ENCODE measurements at regions of chr15 and their contacts with region 1.

Region 1: GRCh38 chr15:55846116-55846707 is 103.3 kb upstream of the PRTG start:
- DNase-seq: peak; percentile 41
- H3K4me3 Mint-ChIP-seq: no peak overlapping the region
- H3K27ac Mint-ChIP-seq: no peak overlapping the region
- H3K4me1 Mint-ChIP-seq: peaks cover 2% of the 10 kb centered on the region
- H3K27me3 Mint-ChIP-seq: no peaks in the 10 kb centered on the region

Region 2: GRCh38 chr15:55649054-55649423 is 197.2 kb before region 1 on chr15:
- CTCF ChIA-PET with region 1: interaction called, 68 read pairs
- POLR2A ChIA-PET with region 1: no interaction called
- DNase-seq: no peak
- H3K4me3 Mint-ChIP-seq: no peak overlapping the region
- H3K27ac Mint-ChIP-seq: no peak overlapping the region
- H3K4me1 Mint-ChIP-seq: no peaks in the 10 kb centered on the region
- H3K27me3 Mint-ChIP-seq: peaks cover 3% of the 10 kb centered on the region

Region 3: GRCh38 chr15:55789066-55789660 is 57.0 kb before region 1 on chr15:
- CTCF ChIA-PET with region 1: interaction called, 12 read pairs
- POLR2A ChIA-PET with region 1: no interaction called
- DNase-seq: peak; percentile 64
- H3K4me3 Mint-ChIP-seq: no peak overlapping the region
- H3K27ac Mint-ChIP-seq: no peak overlapping the region
- H3K4me1 Mint-ChIP-seq: peaks cover 1% of the 10 kb centered on the region
- H3K27me3 Mint-ChIP-seq: no peaks in the 10 kb centered on the region

Region 4: DNA sequence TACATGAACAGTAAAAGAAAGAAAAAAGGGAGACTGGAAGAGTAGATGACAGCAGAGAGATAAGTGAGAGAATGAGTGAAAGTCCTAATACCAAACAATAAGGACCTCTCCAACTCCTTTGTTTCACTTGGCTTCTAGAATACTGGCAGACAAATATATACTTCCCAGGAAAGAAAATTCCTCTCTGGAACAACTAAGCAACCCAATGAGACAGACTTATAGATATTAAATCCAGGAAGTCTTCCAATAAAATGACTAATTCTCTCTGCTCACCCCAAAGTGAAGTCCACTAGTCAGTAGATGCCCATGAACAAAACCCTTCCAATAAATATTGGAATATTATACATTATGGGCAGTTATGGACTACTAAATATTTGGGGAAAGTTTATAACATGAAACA is 33.0 kb after region 1 on chr15:
- CTCF ChIA-PET with region 1: no interaction called
- POLR2A ChIA-PET with region 1: no interaction called
- DNase-seq: no peak
- H3K4me3 Mint-ChIP-seq: no peak overlapping the region
- H3K27ac Mint-ChIP-seq: no peak overlapping the region
- H3K4me1 Mint-ChIP-seq: no peaks in the 10 kb centered on the region
- H3K27me3 Mint-ChIP-seq: no peaks in the 10 kb centered on the region

Measured in activated CD4-positive, alpha-beta memory T cell treated with anti-CD3 and anti-CD28 coated beads, Interleukin-2, amount 10 ng/mL, durations not matched to agents 7 days and 5 days (primary cell).